Motor neuron (in vitro differentiated cells): ENCODE measurements at regions of chr10 and their contacts with region 1.

Region 1: GRCh38 chr10:3776796-3777571 is 8.0 kb downstream of the KLF6 start:
- ATAC-seq: peak in 3 of 8 experiments; percentile 35 to 67 (median 51)
- H3K4me3 ChIP-seq: no peak overlapping the region
- H3K27ac ChIP-seq: no peak overlapping the region
- H3K4me1 ChIP-seq: peaks cover 47% of the 10 kb centered on the region in 2 donors

Region 2: GRCh38 chr10:3248888-3249758 is 527.9 kb before region 1 on chr10:
- in situ Hi-C with region 1: loop called in 3 of 9 experiments (anchors 10 to 25 kb)
- ATAC-seq: peak; percentile 59 to 100 (median 98)
- H3K4me3 ChIP-seq: no peak overlapping the region
- H3K27ac ChIP-seq: peak overlapping the region; percentile 53 to 63
- H3K4me1 ChIP-seq: peaks cover 10 to 14% of the 10 kb centered on the region in 2 donors

Region 3: DNA sequence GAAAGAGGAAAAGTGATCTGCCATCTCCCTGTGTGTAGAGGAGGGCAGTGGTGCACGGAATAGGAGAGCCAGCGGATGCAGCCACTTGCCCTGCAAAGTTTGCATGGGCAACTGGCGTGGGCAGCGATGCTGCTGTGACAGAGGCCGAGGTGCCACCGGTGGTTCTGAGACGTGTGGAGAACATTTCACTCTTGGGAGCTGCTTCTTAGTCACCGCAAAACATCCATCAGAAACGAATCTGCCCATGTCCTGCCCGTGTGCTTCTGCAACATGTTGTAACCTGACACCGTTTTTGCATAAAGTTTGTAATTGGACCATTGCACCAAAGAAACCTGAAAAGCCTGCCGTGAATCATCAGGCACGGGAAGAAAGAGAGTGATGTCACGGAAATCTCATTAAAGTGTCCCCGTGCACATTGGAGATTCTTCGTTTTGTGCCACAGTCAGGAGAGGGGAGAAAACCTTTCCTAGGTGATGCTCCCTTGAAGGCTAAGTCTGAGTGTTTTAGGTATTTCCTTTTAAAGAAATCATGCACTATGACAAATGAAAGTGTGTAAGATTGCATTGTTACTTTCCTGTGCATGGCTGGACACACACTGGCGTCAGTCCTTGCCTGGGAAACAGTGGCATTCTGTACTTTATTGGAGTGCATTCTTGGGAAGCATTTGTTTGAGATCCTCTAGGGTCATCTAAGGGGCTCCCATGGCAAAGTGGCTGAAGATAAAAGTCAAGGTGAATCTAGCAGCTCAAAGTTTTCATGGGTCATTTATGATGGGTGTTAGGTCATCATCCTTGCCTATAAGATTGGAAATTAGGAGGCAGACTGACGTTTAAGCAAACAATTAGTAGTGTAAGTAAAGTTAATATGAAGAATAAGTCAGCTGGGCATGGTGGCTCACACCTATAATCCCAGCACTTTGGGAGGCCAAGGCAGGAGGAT is 294.5 kb before region 1 on chr10:
- in situ Hi-C with region 1: no loop called
- ATAC-seq: peak; percentile 75 to 97 (median 82)
- H3K4me3 ChIP-seq: no peak overlapping the region
- H3K27ac ChIP-seq: peak overlapping the region; percentile 1 to 24
- H3K4me1 ChIP-seq: peaks cover 41 to 45% of the 10 kb centered on the region in 2 donors

Region 4: DNA sequence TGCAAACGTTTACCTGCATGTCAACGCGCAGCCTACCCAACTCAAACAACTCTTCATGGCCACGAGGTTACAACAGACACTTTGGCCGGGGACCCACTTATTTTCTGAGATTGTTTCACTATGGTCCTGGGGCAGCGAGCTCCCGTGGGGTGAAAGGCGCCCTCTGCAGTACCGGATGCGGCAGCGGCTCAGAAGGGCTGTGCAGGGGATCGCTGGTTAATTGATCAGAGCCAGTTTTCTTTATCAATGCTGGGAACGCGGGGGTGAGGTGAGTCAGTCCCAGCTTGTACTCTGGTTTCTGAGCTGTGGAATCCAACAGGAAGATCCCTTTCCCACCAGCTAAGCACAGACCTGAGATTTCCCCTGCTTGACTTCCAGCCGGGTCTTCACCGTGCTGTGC is 374.5 kb after region 1 on chr10:
- in situ Hi-C with region 1: no loop called
- ATAC-seq: no peak
- H3K4me3 ChIP-seq: no peak overlapping the region
- H3K27ac ChIP-seq: no peak overlapping the region
- H3K4me1 ChIP-seq: no peaks in the 10 kb centered on the region